Activated CD4-positive, alpha-beta T cell treated with anti-CD3 and anti-CD28 coated beads for 36 hours (primary cell): ENCODE measurements at regions of chr1 and their contacts with region 1.

Region 1: DNA sequence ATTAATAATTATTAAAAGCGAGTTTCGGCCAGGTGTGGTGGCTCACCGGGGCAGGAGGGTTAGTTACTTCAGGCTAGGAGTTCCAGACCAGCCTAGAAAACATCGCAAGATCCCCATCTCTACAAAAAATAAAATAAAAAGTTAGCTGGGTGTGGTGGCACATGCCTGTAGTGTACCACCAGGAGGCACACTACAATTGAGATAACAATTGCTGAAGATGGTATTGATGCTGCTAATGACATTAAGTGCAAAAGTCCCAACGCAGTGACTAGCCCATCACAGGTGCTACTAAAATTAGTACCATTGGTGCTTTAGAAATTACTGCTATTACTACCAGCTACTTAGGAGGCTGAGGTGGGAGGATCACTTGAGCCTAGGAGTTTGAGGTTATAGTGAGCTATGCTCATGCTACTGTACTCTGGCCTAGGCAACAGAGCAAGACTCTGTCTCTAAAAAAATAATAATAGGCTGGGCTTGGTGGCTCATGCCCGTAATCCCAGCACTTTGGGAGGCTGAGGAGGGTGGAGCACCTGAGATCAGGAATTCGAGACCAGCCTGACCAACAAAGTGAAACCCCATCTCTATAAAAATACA is 156.6 kb downstream of the GREM2 start:
- DNase-seq: no peak
- ATAC-seq: no peak
- H3K4me3 Mint-ChIP-seq: no peak overlapping the region
- H3K27ac Mint-ChIP-seq: no peak overlapping the region
- H3K4me1 Mint-ChIP-seq: no peaks in the 10 kb centered on the region
- H3K27me3 Mint-ChIP-seq: no peaks in the 10 kb centered on the region

Region 2: DNA sequence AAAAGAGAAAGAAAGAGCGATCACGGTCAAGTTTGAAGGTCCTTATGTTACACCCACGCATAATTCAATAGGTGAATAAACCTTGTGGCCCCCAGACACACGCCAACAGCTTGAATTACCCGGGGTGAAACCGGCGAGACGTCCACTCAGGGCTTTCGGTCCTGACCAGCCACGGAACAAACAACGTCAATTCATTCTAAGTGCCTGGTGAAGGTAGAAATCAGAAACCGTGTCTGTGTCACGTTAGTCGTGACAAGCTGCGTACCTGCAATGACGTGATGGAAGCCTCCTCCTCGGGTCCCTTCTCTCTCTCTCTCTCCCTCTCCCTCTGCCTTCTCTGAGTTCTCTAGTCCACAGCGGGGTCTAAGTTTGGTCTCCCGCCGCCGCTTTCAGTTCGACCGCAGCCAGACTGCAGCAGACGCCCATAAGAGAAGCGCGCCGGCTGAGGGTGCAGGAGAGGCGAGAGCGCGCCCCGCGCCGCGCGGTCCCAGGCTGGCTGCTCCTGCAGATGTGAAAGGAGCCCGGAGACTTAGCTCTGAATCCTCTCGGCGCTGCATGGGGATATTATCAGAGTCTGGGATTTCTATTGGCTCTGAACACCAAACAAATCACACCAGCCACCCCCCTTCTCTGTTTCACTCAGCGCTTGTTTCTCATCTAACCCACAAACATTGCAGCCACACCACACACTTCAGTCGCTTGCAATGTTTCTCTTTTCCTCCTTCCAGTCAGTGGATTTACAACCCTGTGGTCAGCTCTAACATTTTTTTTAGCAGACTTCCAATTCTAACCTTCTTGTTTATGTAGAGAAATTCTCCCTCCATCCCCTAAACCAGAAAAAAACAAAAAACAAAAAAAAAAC is 156.5 kb after region 1 on chr1 and contains the start of gene GREM2:
- CTCF ChIA-PET with region 1: no interaction called
- POLR2A ChIA-PET with region 1: no interaction called
- intact Hi-C with region 1: loop called in 1 of 2 experiments (anchors 5 kb)
- DNase-seq: peak; percentile 63
- ATAC-seq: peak; percentile 86
- H3K4me3 Mint-ChIP-seq: peak within 1 kb of the TSS; percentile 75
- H3K27ac Mint-ChIP-seq: no peak within 1 kb of the TSS
- H3K4me1 Mint-ChIP-seq: peaks cover 25% of the 10 kb centered on the region
- H3K27me3 Mint-ChIP-seq: peaks cover 37% of the 10 kb centered on the region
- total RNA-seq, gene GREM2: 0.07 TPM

Region 3: DNA sequence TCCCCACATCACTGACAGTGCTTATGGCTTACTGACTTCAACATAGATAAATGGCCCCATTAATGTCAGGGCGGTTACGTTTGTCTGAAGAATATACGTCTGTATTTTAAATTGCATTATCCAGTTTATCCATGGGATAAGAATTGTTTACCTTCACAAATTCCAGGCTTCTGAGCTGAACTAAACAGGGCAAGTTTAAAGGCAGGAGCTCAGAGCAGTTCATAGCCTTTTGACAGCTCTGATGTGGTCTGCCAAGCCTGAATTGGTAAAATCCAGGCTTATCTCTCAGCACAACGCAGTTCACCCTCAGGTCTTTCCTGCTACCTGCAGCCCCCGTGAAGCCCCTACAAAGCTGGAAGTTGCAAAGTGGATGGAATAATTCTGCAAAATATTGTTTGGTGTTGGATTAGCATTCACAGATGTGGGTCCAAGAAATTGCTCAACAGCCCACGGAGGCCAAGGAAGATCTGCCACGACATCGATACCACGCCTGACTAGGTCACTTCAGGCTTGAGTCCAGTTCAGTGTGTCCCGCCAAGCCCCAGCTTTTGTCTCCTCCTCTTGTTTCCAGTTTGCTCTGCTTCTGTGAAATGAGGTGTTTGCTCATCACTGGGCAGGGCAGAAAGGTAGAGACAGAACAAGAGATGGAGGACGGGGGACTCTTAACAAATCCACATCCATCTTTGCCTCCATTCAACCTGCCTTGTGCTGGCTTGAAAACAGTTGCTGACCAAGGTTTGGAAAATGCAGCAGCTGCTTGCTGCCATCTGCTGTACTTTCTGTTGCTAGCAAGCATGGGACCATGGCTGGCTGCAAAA is 236.4 kb after region 1 on chr1:
- CTCF ChIA-PET with region 1: interaction called, 3 read pairs
- POLR2A ChIA-PET with region 1: no interaction called
- intact Hi-C with region 1: loop called in 1 of 2 experiments (anchors 5 kb)
- DNase-seq: peak; percentile 7
- ATAC-seq: no peak
- H3K4me3 Mint-ChIP-seq: no peak overlapping the region
- H3K27ac Mint-ChIP-seq: no peak overlapping the region
- H3K4me1 Mint-ChIP-seq: peaks cover 10% of the 10 kb centered on the region
- H3K27me3 Mint-ChIP-seq: peaks cover 1% of the 10 kb centered on the region